ENCODE measurements at regions of chr19 and their contacts with region 1.

Region 1: DNA sequence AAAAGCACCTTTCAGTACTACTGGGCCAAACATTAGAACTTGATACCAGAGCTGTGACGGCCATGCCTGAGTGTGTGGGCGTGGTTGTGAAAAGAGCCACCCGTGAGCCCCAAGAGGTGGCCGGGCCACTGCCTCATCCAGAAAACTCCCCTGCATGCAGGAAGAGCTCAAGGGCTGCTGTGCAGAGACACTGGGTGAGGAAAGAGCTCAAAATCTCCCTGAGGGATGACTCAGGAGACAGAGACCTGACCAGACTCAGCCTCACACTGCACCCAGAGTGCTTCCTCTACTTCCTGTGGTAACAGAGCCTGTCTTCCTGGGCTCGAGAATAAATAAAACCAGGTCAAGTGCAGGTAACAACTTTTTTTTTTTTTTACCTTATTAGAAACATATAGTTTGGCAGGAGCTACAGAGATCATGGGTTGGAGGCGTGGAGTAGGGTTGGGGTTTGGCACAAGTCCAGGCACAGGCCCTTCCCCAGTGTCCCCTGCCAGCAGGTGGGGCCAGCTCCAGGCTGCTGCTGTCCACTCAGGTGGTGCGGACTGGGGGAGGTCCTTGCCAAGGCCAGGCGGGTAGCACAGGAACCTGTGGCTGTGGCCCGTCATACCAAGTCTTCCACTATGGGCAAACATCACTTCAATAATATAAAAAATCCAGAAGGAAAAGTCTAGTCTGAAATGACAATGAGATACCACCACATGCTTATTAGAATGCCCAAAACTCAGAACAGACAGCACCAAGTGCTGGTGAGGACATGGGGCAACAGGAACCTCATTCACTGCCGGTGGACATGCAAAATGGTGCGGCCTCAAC is 25.5 kb downstream of the ELL start:
- DNase-seq: peak; percentile 71
- ATAC-seq: peak; percentile 90
- H3K4me3 Mint-ChIP-seq: peak overlapping the region; percentile 63
- H3K27ac Mint-ChIP-seq: peak overlapping the region; percentile 87
- H3K4me1 Mint-ChIP-seq: peaks cover 81% of the 10 kb centered on the region
- H3K27me3 Mint-ChIP-seq: no peaks in the 10 kb centered on the region

Region 2: GRCh38 chr19:18469069-18469846 is 27.1 kb before region 1 on chr19:
- CTCF ChIA-PET with region 1: interaction called, 18 read pairs
- POLR2A ChIA-PET with region 1: no interaction called
- DNase-seq: peak; percentile 69
- ATAC-seq: peak; percentile 49
- H3K4me3 Mint-ChIP-seq: no peak overlapping the region
- H3K27ac Mint-ChIP-seq: no peak overlapping the region
- H3K4me1 Mint-ChIP-seq: peaks cover 32% of the 10 kb centered on the region
- H3K27me3 Mint-ChIP-seq: no peaks in the 10 kb centered on the region

Region 3: GRCh38 chr19:18529782-18530181 is 33.4 kb after region 1 on chr19:
- CTCF ChIA-PET with region 1: no interaction called
- POLR2A ChIA-PET with region 1: no interaction called
- DNase-seq: no peak
- ATAC-seq: peak; percentile 20
- H3K4me3 Mint-ChIP-seq: no peak overlapping the region
- H3K27ac Mint-ChIP-seq: no peak overlapping the region
- H3K4me1 Mint-ChIP-seq: no peaks in the 10 kb centered on the region
- H3K27me3 Mint-ChIP-seq: no peaks in the 10 kb centered on the region

Region 4: DNA sequence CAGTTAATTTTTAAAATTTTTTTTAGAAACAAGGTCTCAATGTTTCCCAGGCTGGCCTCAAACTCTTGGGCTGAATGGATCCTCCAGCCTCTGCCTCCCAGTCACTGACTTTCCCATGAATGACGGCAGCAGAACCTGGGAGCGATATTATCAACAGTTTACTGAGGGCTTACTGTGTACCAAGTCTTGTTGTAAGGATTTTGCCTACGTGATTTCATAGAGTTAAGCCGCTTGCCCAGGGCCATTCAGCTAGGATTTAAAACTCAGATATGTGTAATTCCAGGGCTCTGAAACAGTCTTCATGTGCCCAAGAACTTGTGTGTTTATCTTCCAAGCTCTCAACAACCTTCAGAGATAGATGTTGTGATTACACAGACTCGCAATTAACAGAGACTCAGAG is 55.3 kb after region 1 on chr19:
- CTCF ChIA-PET with region 1: no interaction called
- POLR2A ChIA-PET with region 1: no interaction called
- DNase-seq: no peak
- ATAC-seq: no peak
- H3K4me3 Mint-ChIP-seq: no peak overlapping the region
- H3K27ac Mint-ChIP-seq: no peak overlapping the region
- H3K4me1 Mint-ChIP-seq: no peaks in the 10 kb centered on the region
- H3K27me3 Mint-ChIP-seq: peaks cover 2% of the 10 kb centered on the region